Sigmoid colon (tissue), 7 donors: ENCODE measurements at regions of chr9 and their contacts with region 1.

Region 1: DNA sequence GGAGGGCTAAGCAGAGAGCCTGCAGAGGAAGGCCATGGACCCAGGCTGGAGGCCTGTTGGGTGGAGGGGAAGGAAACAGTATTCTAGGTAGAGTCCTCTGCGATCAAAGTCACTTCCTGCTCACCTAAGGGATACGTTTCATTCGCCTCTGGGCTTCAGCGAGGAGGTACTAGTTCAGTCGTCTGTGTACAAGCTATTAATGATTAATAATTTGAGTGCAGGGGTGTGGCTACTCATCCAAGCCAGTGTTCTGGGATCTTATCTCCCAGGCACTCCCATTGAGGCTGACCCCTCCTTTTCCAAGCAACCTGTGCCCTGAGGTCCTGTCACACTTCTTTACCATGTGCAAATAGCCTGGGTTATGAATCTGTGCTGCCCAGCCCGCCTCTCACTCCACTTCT is 25.2 kb downstream of the RALGPS1 start:
- DNase-seq: no peak
- H3K4me3 ChIP-seq: no peak overlapping the region
- H3K27ac ChIP-seq: no peak overlapping the region
- H3K4me1 ChIP-seq: peaks cover 0 to 25% (median 9%) of the 10 kb centered on the region in 4 donors
- H3K27me3 ChIP-seq: no peaks in the 10 kb centered on the region
- CTCF ChIP-seq: no peak
- EP300 ChIP-seq: no peak
- POLR2A ChIP-seq: no peak

Region 2: GRCh38 chr9:127122176-127123063 is 182.6 kb after region 1 on chr9 and contains the start of gene ANGPTL2:
- intact Hi-C with region 1: loop called (anchors 2 kb)
- DNase-seq: peak; percentile 99
- H3K4me3 ChIP-seq: peak within 1 kb of the TSS; percentile 67 to 80 (median 69)
- H3K27ac ChIP-seq: peak within 1 kb of the TSS; percentile 94 to 99 (median 96)
- H3K4me1 ChIP-seq: peaks cover 0 to 68% (median 61%) of the 10 kb centered on the region in 4 donors
- H3K27me3 ChIP-seq: no peaks in the 10 kb centered on the region
- CTCF ChIP-seq: peak in 2 of 4 experiments; percentile 6 to 8
- EP300 ChIP-seq: peak in 2 of 4 donors; percentile 51 to 69
- POLR2A ChIP-seq: peak; percentile 85 to 96
- total RNA-seq, gene ANGPTL2: 50.5 to 112 (median 78.8) TPM

Region 3: DNA sequence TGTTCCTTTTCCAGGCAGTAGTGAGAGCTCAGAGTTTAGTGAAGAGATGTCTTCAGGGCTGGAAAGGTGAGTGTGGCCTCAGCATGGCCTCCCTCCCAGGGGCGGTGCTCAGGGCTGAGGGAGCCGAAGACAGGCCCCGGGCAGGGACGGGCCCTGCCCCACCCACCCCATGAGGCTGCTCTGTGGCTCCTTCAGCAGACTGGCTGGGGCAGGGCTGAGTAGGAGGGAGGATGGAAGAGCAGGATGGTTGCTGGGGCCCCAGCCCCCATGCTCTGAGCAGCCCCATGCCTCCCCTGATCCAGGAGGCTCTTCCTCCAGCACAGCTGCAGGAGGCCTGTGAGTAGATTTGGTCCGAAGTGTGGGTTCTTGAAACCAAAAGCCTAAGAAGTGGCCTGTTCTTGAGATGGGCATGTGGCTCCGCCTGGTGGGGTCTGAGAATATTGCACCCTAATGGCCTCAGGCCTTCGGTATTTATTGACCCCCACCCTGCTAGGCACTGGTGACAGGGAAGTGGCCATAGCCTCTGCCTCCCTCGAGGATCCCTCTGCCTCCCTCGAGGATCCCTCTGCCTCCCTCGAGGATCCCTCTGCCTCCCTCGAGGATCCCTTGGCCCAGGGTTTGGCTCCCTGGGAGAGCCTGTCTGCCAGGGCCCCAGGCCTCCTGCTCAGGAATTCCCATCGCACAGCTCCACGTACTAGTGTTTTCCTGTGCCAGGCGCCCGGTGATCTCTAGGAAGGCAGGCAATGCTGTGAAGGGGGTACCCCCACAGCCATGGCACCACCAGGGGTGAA is 259.4 kb after region 1 on chr9:
- intact Hi-C with region 1: loop called (anchors 1 kb)
- DNase-seq: peak; percentile 92
- H3K4me3 ChIP-seq: no peak overlapping the region
- H3K27ac ChIP-seq: peak overlapping the region; percentile 63 to 79 (median 68)
- H3K4me1 ChIP-seq: peaks cover 0 to 60% (median 43%) of the 10 kb centered on the region in 4 donors
- H3K27me3 ChIP-seq: no peaks in the 10 kb centered on the region
- CTCF ChIP-seq: peak; percentile 95 to 98 (median 98)
- EP300 ChIP-seq: no peak
- POLR2A ChIP-seq: no peak